ENCODE measurements at regions of chr6 and their contacts with region 1.

Region 1: GRCh38 chr6:118283766-118284165 is 264.3 kb upstream of the PLN start:
- DNase-seq: peak; percentile 17 to 23
- H3K4me3 ChIP-seq: no peak overlapping the region
- H3K27ac ChIP-seq: no peak overlapping the region
- H3K4me1 ChIP-seq: no peaks in the 10 kb centered on the region
- H3K27me3 ChIP-seq: no peaks in the 10 kb centered on the region
- CTCF ChIP-seq: peak in 3 of 6 experiments; percentile 38 to 57 (median 55)
- POLR2A ChIP-seq: no peak

Region 2: GRCh38 chr6:117512987-117513573 is 770.7 kb before region 1 on chr6:
- intact Hi-C with region 1: no loop called
- DNase-seq: no peak
- H3K4me3 ChIP-seq: no peak overlapping the region
- H3K27ac ChIP-seq: no peak overlapping the region
- H3K4me1 ChIP-seq: peaks cover 0 to 4% of the 10 kb centered on the region in 2 donors
- H3K27me3 ChIP-seq: no peaks in the 10 kb centered on the region
- CTCF ChIP-seq: no peak
- POLR2A ChIP-seq: no peak

Region 3: GRCh38 chr6:117974914-117975627 is 308.7 kb before region 1 on chr6:
- intact Hi-C with region 1: no loop called
- DNase-seq: no peak
- H3K4me3 ChIP-seq: no peak overlapping the region
- H3K27ac ChIP-seq: no peak overlapping the region
- H3K4me1 ChIP-seq: no peaks in the 10 kb centered on the region
- H3K27me3 ChIP-seq: no peaks in the 10 kb centered on the region
- CTCF ChIP-seq: no peak
- POLR2A ChIP-seq: no peak

Region 4: DNA sequence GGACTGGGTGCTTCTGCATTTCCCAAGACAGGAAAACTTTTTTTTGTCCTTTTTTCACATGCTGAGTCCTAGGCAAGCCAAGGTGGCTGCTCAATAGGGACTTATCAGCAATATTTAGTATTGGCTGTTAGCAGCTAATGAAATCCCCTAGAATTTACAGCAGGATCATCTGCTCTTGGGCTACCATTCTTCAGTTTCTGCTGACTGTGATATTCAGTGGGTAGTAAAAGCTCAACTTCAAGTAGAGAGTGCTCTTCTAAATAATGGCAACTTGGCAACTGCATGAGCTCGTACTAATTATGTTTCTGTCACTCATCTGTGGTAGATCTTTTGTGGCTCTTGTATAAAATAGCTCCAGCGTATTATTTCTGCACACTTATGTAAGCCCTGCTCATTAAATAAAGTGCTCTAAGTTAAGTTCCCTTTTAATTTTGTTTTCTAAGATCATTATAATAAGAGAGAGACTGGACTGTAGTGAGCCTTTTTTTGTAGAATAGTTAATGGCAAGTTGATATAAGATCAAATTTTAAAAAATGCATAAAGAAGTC is 266.4 kb before region 1 on chr6:
- intact Hi-C with region 1: no loop called
- DNase-seq: no peak
- H3K4me3 ChIP-seq: no peak overlapping the region
- H3K27ac ChIP-seq: no peak overlapping the region
- H3K4me1 ChIP-seq: no peaks in the 10 kb centered on the region
- H3K27me3 ChIP-seq: no peaks in the 10 kb centered on the region
- CTCF ChIP-seq: no peak
- POLR2A ChIP-seq: no peak

Region 5: GRCh38 chr6:118800394-118801071 is 516.8 kb after region 1 on chr6:
- intact Hi-C with region 1: loop called (anchors 10 kb)
- DNase-seq: peak; percentile 81 to 83
- H3K4me3 ChIP-seq: no peak overlapping the region
- H3K27ac ChIP-seq: no peak overlapping the region
- H3K4me1 ChIP-seq: peaks cover 0 to 4% of the 10 kb centered on the region in 2 donors
- H3K27me3 ChIP-seq: no peaks in the 10 kb centered on the region
- CTCF ChIP-seq: peak; percentile 57 to 93 (median 74)
- POLR2A ChIP-seq: no peak

Measured in thyroid gland (tissue), 4 donors.